Dorsolateral prefrontal cortex (tissue), 120 donors: ENCODE measurements at regions of chr15 and their contacts with region 1.

Region 1: GRCh38 chr15:63600616-63601025 is 3.4 kb downstream of the FBXL22 start:
- DNase-seq: peak; percentile 63 to 92 (median 85)
- H3K4me3 ChIP-seq: peak overlapping the region; percentile 52 to 93 (median 80)
- H3K27ac ChIP-seq: peak overlapping the region; percentile 76 to 98 (median 93)
- H3K27me3 ChIP-seq: no peaks in the 10 kb centered on the region
- CTCF ChIP-seq: peak in 29 of 56 donors; percentile 7 to 63 (median 37)

Region 2: GRCh38 chr15:63157118-63157843 is 443.3 kb before region 1 on chr15 and contains the start of gene RPS27L:
- intact Hi-C with region 1: loop called in 1 of 2 experiments (anchors 5 kb)
- DNase-seq: peak; percentile 80 to 95 (median 92)
- H3K4me3 ChIP-seq: peak within 1 kb of the TSS; percentile 51 to 99 (median 90)
- H3K27ac ChIP-seq: peak within 1 kb of the TSS; percentile 69 to 98 (median 94)
- H3K27me3 ChIP-seq: no peaks in the 10 kb centered on the region
- CTCF ChIP-seq: peak in 21 of 56 donors; percentile 4 to 35 (median 18)
- total RNA-seq, gene RPS27L: 35.0 to 86.0 (median 57.2) TPM

Region 3: DNA sequence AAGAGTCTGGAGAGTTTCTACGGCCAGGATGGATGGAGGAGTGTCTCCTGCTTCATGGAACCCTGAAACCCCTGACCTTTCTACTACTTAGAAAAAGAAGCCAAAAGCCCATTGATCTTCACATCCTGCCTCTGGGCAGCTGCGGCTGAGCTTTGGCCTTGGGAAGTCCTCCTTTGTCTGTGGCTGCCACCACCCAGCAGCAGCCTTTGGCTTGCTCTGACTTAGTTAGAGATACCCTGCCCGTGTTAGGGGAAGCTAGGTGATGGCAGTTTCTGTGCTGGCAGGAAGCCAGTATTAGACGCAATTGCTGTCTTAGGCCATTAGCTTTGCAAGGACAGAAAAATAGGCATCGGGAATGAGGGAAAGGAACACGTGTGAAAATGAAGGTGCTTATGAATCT is 304.4 kb before region 1 on chr15:
- intact Hi-C with region 1: no loop called
- DNase-seq: peak in 1 of 10 donors; percentile 10
- H3K4me3 ChIP-seq: no peak overlapping the region
- H3K27ac ChIP-seq: no peak overlapping the region
- H3K27me3 ChIP-seq: no peaks in the 10 kb centered on the region
- CTCF ChIP-seq: no peak

Region 4: GRCh38 chr15:63466378-63467192 is 134.0 kb before region 1 on chr15:
- intact Hi-C with region 1: loop called in 1 of 2 experiments (anchors 5 kb)
- DNase-seq: peak in 1 of 10 donors; percentile 25
- H3K4me3 ChIP-seq: peak overlapping the region in 2 of 59 donors; percentile 10 to 26
- H3K27ac ChIP-seq: peak overlapping the region in 4 of 59 donors; percentile 5 to 54 (median 8)
- H3K27me3 ChIP-seq: no peaks in the 10 kb centered on the region
- CTCF ChIP-seq: peak; percentile 43 to 77 (median 62)

Region 5: GRCh38 chr15:63504247-63504978 is 96.2 kb before region 1 on chr15 and contains the start of gene USP3:
- intact Hi-C with region 1: loop called (anchors 1 to 2 kb)
- DNase-seq: peak; percentile 81 to 93 (median 90)
- H3K4me3 ChIP-seq: peak within 1 kb of the TSS; percentile 56 to 88 (median 78)
- H3K27ac ChIP-seq: peak within 1 kb of the TSS; percentile 55 to 96 (median 90)
- H3K27me3 ChIP-seq: peaks cover 0 to 5% (median 0%) of the 10 kb centered on the region in 45 donors
- CTCF ChIP-seq: peak in 51 of 56 donors; percentile 15 to 73 (median 52)
- total RNA-seq, gene USP3: 11.5 to 36.2 (median 21.9) TPM

Region 6: DNA sequence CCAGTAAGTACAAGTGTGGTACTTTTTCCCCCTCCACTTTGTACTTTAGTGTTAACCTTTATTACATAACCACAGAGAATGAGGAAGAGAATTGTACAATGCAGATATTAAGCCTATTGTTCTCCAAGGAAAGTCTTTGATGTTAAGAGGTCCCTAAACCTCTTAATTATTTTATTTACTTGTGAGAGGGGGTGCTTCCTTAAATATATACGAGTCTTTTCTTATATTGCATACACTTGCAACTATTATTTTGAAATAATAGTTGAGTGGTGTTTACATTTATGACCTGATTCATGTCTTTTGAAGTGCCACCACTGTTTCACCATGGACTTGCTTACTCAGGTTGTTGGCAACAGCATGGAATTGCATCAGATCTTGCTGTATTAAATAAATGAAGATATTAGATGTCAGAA is 86.1 kb before region 1 on chr15:
- intact Hi-C with region 1: no loop called
- DNase-seq: no peak
- H3K4me3 ChIP-seq: no peak overlapping the region
- H3K27ac ChIP-seq: peak overlapping the region in 1 of 59 donors; percentile 96
- H3K27me3 ChIP-seq: peaks cover 0 to 3% (median 0%) of the 10 kb centered on the region in 45 donors
- CTCF ChIP-seq: no peak

Region 7: GRCh38 chr15:63544258-63545026 is 56.2 kb before region 1 on chr15:
- intact Hi-C with region 1: no loop called
- DNase-seq: no peak
- H3K4me3 ChIP-seq: peak overlapping the region in 1 of 59 donors; percentile 18
- H3K27ac ChIP-seq: no peak overlapping the region
- H3K27me3 ChIP-seq: no peaks in the 10 kb centered on the region
- CTCF ChIP-seq: no peak

Region 8: GRCh38 chr15:64067564-64068030 is 467.0 kb after region 1 on chr15:
- intact Hi-C with region 1: loop called in 1 of 2 experiments (anchors 10 kb)
- DNase-seq: peak in 6 of 10 donors; percentile 59 to 75 (median 65)
- H3K4me3 ChIP-seq: peak overlapping the region in 2 of 59 donors; percentile 16 to 27
- H3K27ac ChIP-seq: no peak overlapping the region
- H3K27me3 ChIP-seq: no peaks in the 10 kb centered on the region
- CTCF ChIP-seq: peak; percentile 69 to 96 (median 89)